ENCODE measurements at regions of chr9 and their contacts with region 1.

Region 1: GRCh38 chr9:6055213-6055612 is 39.8 kb upstream of the RANBP6 start:
- DNase-seq: peak; percentile 66
- ATAC-seq: peak; percentile 61; the same call in 2 of the 3 replicates
- H3K4me3 ChIP-seq: no peak overlapping the region
- H3K27ac ChIP-seq: no peak overlapping the region
- H3K4me1 ChIP-seq: no peaks in the 10 kb centered on the region
- H3K27me3 ChIP-seq: no peaks in the 10 kb centered on the region
- CTCF ChIP-seq: peak; percentile 69
- EP300 ChIP-seq: no peak
- POLR2A ChIP-seq: no peak
- RAD21 ChIP-seq: peak; percentile 59

Region 2: DNA sequence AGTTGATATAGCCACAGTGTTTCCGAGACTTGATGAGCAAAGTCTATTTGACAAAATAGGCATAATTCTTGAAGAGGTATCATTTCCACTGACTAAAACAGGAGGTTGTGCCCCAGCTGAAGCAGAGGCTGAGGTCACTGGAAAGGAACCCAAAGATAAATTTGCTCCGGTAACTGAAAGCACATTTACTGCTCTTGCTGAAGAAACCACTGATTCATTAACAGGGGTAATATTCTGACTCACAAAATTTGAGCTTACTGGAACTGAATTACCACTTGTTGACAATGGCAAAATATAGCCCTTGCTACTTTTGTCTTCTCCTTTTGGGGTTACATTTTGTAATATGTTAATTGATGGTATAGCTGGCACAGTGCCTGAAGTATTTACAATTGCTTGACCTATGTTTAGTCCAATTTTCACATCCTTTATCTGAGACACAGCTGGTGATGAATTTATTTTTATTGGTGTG is 134.3 kb before region 1 on chr9:
- CTCF ChIA-PET with region 1: no interaction called
- POLR2A ChIA-PET with region 1: no interaction called
- in situ Hi-C with region 1: no loop called
- intact Hi-C with region 1: no loop called
- DNase-seq: no peak
- ATAC-seq: no peak
- H3K4me3 ChIP-seq: no peak overlapping the region
- H3K27ac ChIP-seq: no peak overlapping the region
- H3K4me1 ChIP-seq: no peaks in the 10 kb centered on the region
- H3K27me3 ChIP-seq: no peaks in the 10 kb centered on the region
- CTCF ChIP-seq: no peak
- EP300 ChIP-seq: no peak
- POLR2A ChIP-seq: no peak
- RAD21 ChIP-seq: no peak

Region 3: GRCh38 chr9:6106576-6107339 is 51.5 kb after region 1 on chr9:
- CTCF ChIA-PET with region 1: no interaction called
- POLR2A ChIA-PET with region 1: no interaction called
- in situ Hi-C with region 1: no loop called
- intact Hi-C with region 1: loop called (anchors 1 kb)
- DNase-seq: peak; percentile 25
- ATAC-seq: peak; percentile 94
- H3K4me3 ChIP-seq: no peak overlapping the region
- H3K27ac ChIP-seq: no peak overlapping the region
- H3K4me1 ChIP-seq: no peaks in the 10 kb centered on the region
- H3K27me3 ChIP-seq: 0 out of 5 replicates have a peak, but pooled peaks cover 0 to 3% of the 10 kb centered on the region in 2 experiments
- CTCF ChIP-seq: peak; percentile 46
- EP300 ChIP-seq: no peak
- POLR2A ChIP-seq: no peak
- RAD21 ChIP-seq: no peak

Region 4: DNA sequence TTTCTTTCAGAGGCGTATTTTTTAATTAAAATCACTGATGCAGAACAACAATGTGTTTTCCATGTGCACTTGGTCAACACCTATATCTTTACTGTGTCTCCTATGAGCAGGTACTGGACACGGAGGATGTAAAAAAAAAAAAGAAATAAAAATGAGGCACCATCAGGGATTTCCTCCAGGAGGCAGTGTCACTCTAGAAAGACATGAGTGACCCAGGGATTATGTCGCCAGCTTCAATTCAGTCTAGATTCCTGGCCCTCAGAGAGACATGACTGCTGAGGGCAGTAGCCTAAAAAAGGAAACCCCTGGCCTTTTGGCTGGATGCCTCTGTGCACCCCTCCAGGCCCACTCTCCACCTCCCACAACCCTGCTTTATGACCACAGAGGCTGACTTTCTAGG is 142.1 kb after region 1 on chr9:
- CTCF ChIA-PET with region 1: no interaction called
- POLR2A ChIA-PET with region 1: no interaction called
- in situ Hi-C with region 1: no loop called
- intact Hi-C with region 1: loop called (anchors 5 kb)
- DNase-seq: peak; percentile 31
- ATAC-seq: peak; percentile 74
- H3K4me3 ChIP-seq: no peak overlapping the region
- H3K27ac ChIP-seq: no peak overlapping the region
- H3K4me1 ChIP-seq: no peaks in the 10 kb centered on the region
- H3K27me3 ChIP-seq: no peaks in the 10 kb centered on the region
- CTCF ChIP-seq: peak; percentile 70
- EP300 ChIP-seq: no peak
- POLR2A ChIP-seq: no peak
- RAD21 ChIP-seq: peak; percentile 22; the same call in 1 of the 2 replicates